CD4-positive, alpha-beta T cell (primary cell): ENCODE measurements at regions of chr1 and their contacts with region 1.

Region 1: DNA sequence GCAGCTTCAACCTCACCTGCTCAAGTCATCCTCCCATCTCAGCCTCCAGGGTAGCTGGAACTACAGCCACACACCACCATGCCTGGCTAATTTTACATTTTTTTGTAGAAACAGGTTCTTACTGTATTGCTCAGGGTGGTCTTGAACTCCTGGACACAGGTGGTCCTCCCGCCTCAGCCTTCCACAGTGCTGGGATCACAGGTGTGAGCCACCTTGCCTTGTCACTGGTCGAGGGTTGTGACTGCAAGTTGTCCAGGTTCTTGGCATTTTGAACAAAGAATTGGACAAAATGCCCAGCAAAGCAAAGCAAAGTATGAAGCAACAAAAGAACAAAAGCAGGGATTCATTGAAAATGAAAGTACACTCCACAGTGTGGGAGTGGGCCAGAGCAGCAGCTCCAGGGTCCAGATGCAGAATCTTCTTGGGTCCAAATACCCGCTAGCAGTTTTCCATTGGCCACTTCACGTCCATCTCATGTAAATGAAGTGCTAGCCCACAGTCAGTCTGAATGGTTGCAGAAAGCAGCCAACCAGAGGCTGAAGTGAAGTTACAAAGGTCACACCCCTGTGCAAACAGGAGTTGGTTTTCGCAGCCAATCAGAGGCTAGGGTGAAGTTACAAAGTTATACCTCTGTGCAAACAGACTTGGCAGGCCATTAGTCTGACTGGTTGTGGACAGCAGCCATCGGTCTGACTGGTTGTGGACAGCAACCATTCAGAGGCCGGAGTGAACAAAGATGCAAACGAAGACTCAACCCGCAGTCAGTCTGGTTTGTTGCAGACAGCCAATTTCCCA is 109.5 kb upstream of the KIF26B start:
- DNase-seq: no peak
- ATAC-seq: no peak
- H3K4me3 ChIP-seq: no peak overlapping the region
- H3K4me3 Mint-ChIP-seq: no peak overlapping the region
- H3K27ac ChIP-seq: no peak overlapping the region
- H3K27ac Mint-ChIP-seq: no peak overlapping the region
- H3K4me1 ChIP-seq: no peaks in the 10 kb centered on the region
- H3K4me1 Mint-ChIP-seq: no peaks in the 10 kb centered on the region
- H3K27me3 ChIP-seq: no peaks in the 10 kb centered on the region
- H3K27me3 Mint-ChIP-seq: no peaks in the 10 kb centered on the region
- CTCF ChIP-seq: no peak

Region 2: GRCh38 chr1:244603498-244603897 is 441.8 kb before region 1 on chr1:
- CTCF ChIA-PET with region 1: interaction called, 16 read pairs
- POLR2A ChIA-PET with region 1: interaction called, 9 read pairs
- intact Hi-C with region 1: loop called (anchors 1 kb)
- DNase-seq: peak in 3 of 14 experiments; percentile 49 to 63 (median 59)
- ATAC-seq: no peak
- H3K4me3 ChIP-seq: no peak overlapping the region
- H3K4me3 Mint-ChIP-seq: no peak overlapping the region
- H3K27ac ChIP-seq: no peak overlapping the region
- H3K27ac Mint-ChIP-seq: no peak overlapping the region
- H3K4me1 ChIP-seq: no peaks in the 10 kb centered on the region
- H3K4me1 Mint-ChIP-seq: no peaks in the 10 kb centered on the region
- H3K27me3 ChIP-seq: no peaks in the 10 kb centered on the region
- H3K27me3 Mint-ChIP-seq: no peaks in the 10 kb centered on the region
- CTCF ChIP-seq: peak; percentile 89

Region 3: DNA sequence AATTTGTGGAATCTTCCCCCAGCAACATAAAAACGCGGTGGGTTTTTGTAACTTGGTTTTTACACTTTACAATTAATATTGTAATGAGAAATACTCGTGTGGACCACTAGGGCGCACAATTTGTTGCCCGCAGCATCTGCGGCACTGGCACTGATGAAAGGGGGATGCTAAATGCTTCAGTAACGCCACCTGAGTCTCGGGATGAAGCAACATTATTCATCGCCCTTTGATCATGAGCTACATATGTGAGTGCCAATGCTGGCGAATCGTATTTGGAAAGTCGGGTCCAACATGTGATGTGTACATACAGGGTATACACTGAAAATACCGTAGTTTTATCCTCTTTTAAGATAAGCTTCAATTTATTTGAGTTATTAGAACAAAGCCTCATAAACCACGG is 244.0 kb before region 1 on chr1:
- CTCF ChIA-PET with region 1: interaction called, 45 read pairs
- POLR2A ChIA-PET with region 1: interaction called, 17 read pairs
- intact Hi-C with region 1: loop called (anchors 1 kb)
- DNase-seq: peak; percentile 23 to 81 (median 46)
- ATAC-seq: peak; percentile 91
- H3K4me3 ChIP-seq: no peak overlapping the region
- H3K4me3 Mint-ChIP-seq: no peak overlapping the region
- H3K27ac ChIP-seq: no peak overlapping the region
- H3K27ac Mint-ChIP-seq: no peak overlapping the region
- H3K4me1 ChIP-seq: peaks cover 3% of the 10 kb centered on the region
- H3K4me1 Mint-ChIP-seq: peaks cover 4% of the 10 kb centered on the region
- H3K27me3 ChIP-seq: no peaks in the 10 kb centered on the region
- H3K27me3 Mint-ChIP-seq: peaks cover 4% of the 10 kb centered on the region
- CTCF ChIP-seq: peak; percentile 83

Region 4: GRCh38 chr1:244854865-244855578 is 190.3 kb before region 1 on chr1:
- CTCF ChIA-PET with region 1: interaction called, 10 read pairs
- POLR2A ChIA-PET with region 1: interaction called, 3 read pairs
- intact Hi-C with region 1: loop called in 1 of 2 experiments (anchors 2 kb)
- DNase-seq: peak in 1 of 14 experiments; percentile 29
- ATAC-seq: peak; percentile 31
- H3K4me3 ChIP-seq: no peak overlapping the region
- H3K4me3 Mint-ChIP-seq: peak overlapping the region; percentile 40
- H3K27ac ChIP-seq: peak overlapping the region; percentile 13 to 50
- H3K27ac Mint-ChIP-seq: peak overlapping the region; percentile 78
- H3K4me1 ChIP-seq: peaks cover 30% of the 10 kb centered on the region
- H3K4me1 Mint-ChIP-seq: peaks cover 99% of the 10 kb centered on the region
- H3K27me3 ChIP-seq: no peaks in the 10 kb centered on the region
- H3K27me3 Mint-ChIP-seq: no peaks in the 10 kb centered on the region
- CTCF ChIP-seq: no peak

Region 5: DNA sequence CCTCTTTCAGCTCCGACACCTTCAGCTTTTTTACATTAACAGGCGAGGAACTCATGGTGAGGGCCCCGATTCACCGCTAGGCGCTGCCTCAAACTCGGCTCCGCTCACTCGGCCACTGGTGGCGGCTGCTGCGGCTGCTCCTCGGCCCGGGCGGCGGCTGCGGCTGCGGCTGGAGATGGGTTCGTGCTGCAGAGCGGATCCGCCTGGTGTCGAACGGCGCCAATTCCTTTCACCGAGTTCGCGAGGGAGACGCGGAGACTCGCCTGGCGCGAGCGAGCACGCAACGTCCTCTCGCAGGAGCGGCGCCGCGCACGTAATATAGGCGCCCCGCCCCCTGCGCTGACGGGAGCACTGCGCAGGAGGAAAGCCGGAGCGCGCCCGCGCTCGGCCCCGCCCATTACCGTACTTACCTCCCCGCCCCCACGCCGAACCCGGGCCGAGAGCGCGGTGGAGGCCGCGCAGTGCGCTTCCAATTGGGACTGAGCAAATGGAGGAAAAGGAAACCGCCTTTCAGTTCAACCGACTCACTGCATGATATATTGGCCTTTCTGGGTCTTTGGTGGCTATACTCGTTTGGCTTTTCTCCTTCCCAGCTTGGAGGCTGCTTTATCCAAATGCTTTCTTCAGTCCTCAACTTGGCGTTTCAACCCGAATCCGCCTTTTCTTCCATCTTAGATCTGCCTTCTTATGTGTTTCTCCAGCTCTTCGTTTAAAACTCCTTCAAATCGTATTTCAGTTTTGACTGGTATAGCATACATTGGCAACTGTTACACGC is 180.8 kb before region 1 on chr1 and contains the start of gene HNRNPU:
- CTCF ChIA-PET with region 1: interaction called, 15 read pairs
- POLR2A ChIA-PET with region 1: interaction called, 11 read pairs
- intact Hi-C with region 1: loop called in 1 of 2 experiments (anchors 2 kb)
- DNase-seq: peak; percentile 90 to 99 (median 96)
- ATAC-seq: peak; percentile 62
- H3K4me3 ChIP-seq: peak within 1 kb of the TSS; percentile 91
- H3K4me3 Mint-ChIP-seq: peak within 1 kb of the TSS; percentile 96
- H3K27ac ChIP-seq: peak within 1 kb of the TSS; percentile 98 to 99
- H3K27ac Mint-ChIP-seq: peak within 1 kb of the TSS; percentile 98
- H3K4me1 ChIP-seq: peaks cover 24% of the 10 kb centered on the region
- H3K4me1 Mint-ChIP-seq: peaks cover 53% of the 10 kb centered on the region
- H3K27me3 ChIP-seq: no peaks in the 10 kb centered on the region
- H3K27me3 Mint-ChIP-seq: peaks cover 5% of the 10 kb centered on the region
- CTCF ChIP-seq: peak; percentile 30
- total RNA-seq, gene HNRNPU: 415 TPM

Region 6: GRCh38 chr1:245031041-245031440 is 14.2 kb before region 1 on chr1:
- CTCF ChIA-PET with region 1: interaction called, 10 read pairs
- POLR2A ChIA-PET with region 1: no interaction called
- intact Hi-C with region 1: no loop called
- DNase-seq: no peak
- ATAC-seq: no peak
- H3K4me3 ChIP-seq: no peak overlapping the region
- H3K4me3 Mint-ChIP-seq: no peak overlapping the region
- H3K27ac ChIP-seq: no peak overlapping the region
- H3K27ac Mint-ChIP-seq: no peak overlapping the region
- H3K4me1 ChIP-seq: peaks cover 4% of the 10 kb centered on the region
- H3K4me1 Mint-ChIP-seq: no peaks in the 10 kb centered on the region
- H3K27me3 ChIP-seq: no peaks in the 10 kb centered on the region
- H3K27me3 Mint-ChIP-seq: no peaks in the 10 kb centered on the region
- CTCF ChIP-seq: no peak

Region 7: DNA sequence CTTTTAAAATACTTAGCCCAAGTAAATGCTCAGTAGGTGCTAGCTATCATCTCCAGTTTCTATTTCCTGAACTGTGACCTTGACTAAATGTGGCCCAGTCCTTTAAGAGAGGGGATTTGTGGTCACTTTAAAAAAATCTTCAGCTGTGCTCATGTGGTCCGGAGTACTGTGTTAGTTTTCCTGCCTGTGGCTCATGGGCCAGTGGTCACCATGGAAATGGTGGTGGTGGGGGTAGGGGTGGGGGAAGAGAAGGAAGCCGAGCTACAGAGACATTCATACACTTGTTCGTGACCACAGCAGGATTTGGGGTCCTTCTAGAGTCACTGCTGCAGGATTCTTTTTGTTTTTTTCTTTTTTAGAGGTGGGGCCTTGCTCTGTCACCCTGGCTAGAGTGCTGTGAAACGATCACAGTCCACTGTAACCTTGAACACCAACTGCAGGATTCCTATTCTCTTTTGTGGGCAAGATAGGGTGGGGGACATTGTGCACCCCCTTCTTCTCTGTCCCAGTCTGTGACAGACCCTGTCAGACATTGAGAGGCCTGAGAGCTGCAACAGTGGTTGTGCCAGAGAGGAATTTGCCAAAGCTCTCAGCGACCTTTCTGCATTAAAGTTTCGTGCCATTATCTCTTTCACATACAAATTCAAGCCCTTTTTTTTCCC is 135.3 kb after region 1 on chr1:
- CTCF ChIA-PET with region 1: no interaction called
- POLR2A ChIA-PET with region 1: no interaction called
- intact Hi-C with region 1: no loop called
- DNase-seq: no peak
- ATAC-seq: no peak
- H3K4me3 ChIP-seq: no peak overlapping the region
- H3K4me3 Mint-ChIP-seq: no peak overlapping the region
- H3K27ac ChIP-seq: no peak overlapping the region
- H3K27ac Mint-ChIP-seq: no peak overlapping the region
- H3K4me1 ChIP-seq: no peaks in the 10 kb centered on the region
- H3K4me1 Mint-ChIP-seq: no peaks in the 10 kb centered on the region
- H3K27me3 ChIP-seq: no peaks in the 10 kb centered on the region
- H3K27me3 Mint-ChIP-seq: no peaks in the 10 kb centered on the region
- CTCF ChIP-seq: no peak